ENCODE measurements at regions of chr7 and their contacts with region 1.

Region 1: DNA sequence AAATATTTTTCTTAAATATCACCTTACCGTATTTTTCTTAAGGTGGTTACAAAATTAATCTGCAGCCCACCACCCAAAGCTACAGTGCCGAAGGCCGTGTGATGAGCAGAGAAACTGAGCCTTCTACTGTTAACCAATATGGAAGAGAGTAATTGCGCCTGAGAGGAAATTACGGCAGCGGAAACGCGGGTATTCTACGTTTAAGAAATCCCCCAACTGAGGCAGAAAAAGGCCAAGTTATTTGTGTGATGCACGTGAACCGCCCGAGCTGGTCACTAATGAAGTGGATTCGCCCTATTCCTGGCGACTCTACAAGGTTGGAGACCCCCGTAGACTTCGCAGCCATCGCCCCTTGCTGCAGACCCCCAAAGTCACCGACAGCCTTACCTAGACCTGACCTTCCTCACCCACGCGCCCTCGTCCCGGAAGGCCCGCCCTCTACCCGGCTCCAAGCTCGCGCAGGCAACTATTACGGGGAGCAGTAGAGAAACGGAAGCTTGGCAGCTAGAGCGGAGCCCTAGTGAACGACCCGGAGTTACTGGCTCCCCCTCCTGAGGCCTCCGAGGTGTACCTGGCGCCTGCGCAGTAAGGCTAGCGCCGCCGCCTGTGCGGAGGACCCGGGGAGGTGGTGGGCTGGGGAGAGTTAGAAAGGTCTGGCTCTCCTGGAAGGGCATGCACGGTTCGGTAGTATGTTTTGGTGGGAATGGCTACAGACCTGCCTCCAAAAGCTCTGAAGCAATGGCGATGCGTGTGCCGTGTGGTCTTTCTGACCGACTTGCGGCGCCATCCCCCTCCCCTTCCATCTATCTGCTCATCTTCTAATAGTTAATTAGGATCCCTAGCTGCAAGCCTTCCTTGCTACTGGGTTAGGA is at the start of gene MRPS33:
- DNase-seq: peak; percentile 95 to 96
- ATAC-seq: peak; percentile 99
- H3K4me3 ChIP-seq: peak within 1 kb of the TSS; percentile 67 to 78 (median 71)
- H3K27ac ChIP-seq: peak within 1 kb of the TSS; percentile 79 to 91 (median 84)
- H3K4me1 ChIP-seq: peaks cover 14 to 18% of the 10 kb centered on the region in 2 donors
- H3K27me3 ChIP-seq: peaks cover 0 to 4% (median 0%) of the 10 kb centered on the region in 3 donors
- CTCF ChIP-seq: no peak
- POLR2A ChIP-seq: peak; percentile 70 to 76
- total RNA-seq, gene MRPS33: 23.4 to 60.1 (median 40.8) TPM

Region 2: GRCh38 chr7:140479062-140479738 is 535.6 kb before region 1 on chr7 and contains the start of gene MKRN1:
- in situ Hi-C with region 1: loop called in 1 of 4 experiments (anchors 25 kb)
- intact Hi-C with region 1: loop called (anchors 5 kb)
- DNase-seq: peak; percentile 92
- ATAC-seq: peak; percentile 92 to 97
- H3K4me3 ChIP-seq: peak within 1 kb of the TSS; percentile 85 to 98 (median 91)
- H3K27ac ChIP-seq: peak within 1 kb of the TSS; percentile 73 to 96 (median 84)
- H3K4me1 ChIP-seq: peaks cover 13 to 18% of the 10 kb centered on the region in 2 donors
- H3K27me3 ChIP-seq: no peaks in the 10 kb centered on the region
- CTCF ChIP-seq: peak in 1 of 5 experiments; percentile 24
- POLR2A ChIP-seq: peak; percentile 53 to 77
- total RNA-seq, gene MKRN1: 38.0 to 90.4 (median 64.7) TPM

Region 3: GRCh38 chr7:140673063-140673773 is 341.5 kb before region 1 on chr7:
- in situ Hi-C with region 1: loop called in 3 of 4 experiments (anchors 25 kb)
- intact Hi-C with region 1: loop called (anchors 5 kb)
- DNase-seq: peak in 1 of 2 donors; percentile 31
- ATAC-seq: peak; percentile 72 to 75
- H3K4me3 ChIP-seq: peak overlapping the region; percentile 66 to 89 (median 75)
- H3K27ac ChIP-seq: peak overlapping the region; percentile 69 to 83 (median 76)
- H3K4me1 ChIP-seq: peaks cover 16 to 26% of the 10 kb centered on the region in 2 donors
- H3K27me3 ChIP-seq: no peaks in the 10 kb centered on the region
- CTCF ChIP-seq: no peak
- POLR2A ChIP-seq: peak; percentile 18 to 45

Region 4: GRCh38 chr7:140810830-140811556 is 203.8 kb before region 1 on chr7:
- in situ Hi-C with region 1: loop called (anchors 5 kb)
- intact Hi-C with region 1: loop called (anchors 1 kb)
- DNase-seq: peak; percentile 18 to 41
- ATAC-seq: peak; percentile 93 to 97
- H3K4me3 ChIP-seq: no peak overlapping the region
- H3K27ac ChIP-seq: no peak overlapping the region
- H3K4me1 ChIP-seq: no peaks in the 10 kb centered on the region
- H3K27me3 ChIP-seq: no peaks in the 10 kb centered on the region
- CTCF ChIP-seq: peak; percentile 53 to 78 (median 70)
- POLR2A ChIP-seq: no peak

Region 5: GRCh38 chr7:140876519-140877248 is 138.1 kb before region 1 on chr7:
- in situ Hi-C with region 1: no loop called
- intact Hi-C with region 1: no loop called
- DNase-seq: no peak
- ATAC-seq: no peak
- H3K4me3 ChIP-seq: no peak overlapping the region
- H3K27ac ChIP-seq: no peak overlapping the region
- H3K4me1 ChIP-seq: peaks cover 9 to 17% of the 10 kb centered on the region in 2 donors
- H3K27me3 ChIP-seq: no peaks in the 10 kb centered on the region
- CTCF ChIP-seq: no peak
- POLR2A ChIP-seq: no peak

Region 6: DNA sequence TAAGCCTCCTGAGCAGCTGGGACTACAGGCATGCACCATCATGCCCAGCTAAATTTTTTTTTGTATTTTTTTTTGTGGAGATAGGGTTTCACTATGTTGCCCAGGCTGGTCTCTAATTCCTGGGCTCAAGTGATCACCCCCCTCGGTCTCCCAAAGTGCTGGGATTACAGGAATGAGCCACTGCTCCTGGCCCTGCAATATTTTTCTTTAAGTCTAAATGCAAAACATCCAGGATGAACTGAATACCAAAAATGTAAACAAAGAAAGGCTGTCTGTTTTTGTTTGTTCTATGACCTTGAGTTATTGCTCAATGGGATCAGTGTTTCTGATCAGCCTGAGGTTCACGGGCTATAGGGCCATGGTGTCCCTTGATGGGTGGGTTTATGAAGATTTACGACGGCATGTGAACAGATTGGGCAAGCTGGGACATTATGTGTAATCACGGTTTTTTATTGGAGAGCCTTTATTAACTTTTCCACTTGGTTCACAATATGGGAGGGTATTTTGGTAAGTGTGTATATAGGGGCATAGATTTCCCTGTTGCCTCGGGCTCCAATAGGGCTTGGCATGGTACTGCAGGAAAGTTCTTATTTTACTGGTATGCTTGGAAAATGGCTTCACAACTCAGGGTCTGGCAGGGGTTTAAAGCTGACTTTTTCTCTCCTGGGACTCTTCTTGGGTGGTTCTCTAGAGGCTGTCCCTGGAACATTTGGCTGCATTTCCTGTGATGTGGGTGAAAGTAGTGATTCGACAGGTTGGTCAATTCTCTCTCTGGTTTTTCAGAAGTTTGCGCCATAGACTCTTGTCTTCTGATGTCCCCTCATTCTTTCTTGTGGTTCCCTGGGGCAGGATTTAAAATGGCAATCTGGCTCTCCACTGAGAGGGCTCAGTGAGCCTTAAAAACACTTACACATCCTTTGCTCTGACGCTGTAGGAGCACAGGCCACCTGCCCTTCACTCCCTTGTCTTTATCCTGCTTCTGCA is 41.6 kb before region 1 on chr7:
- in situ Hi-C with region 1: no loop called
- intact Hi-C with region 1: no loop called
- DNase-seq: no peak
- ATAC-seq: no peak
- H3K4me3 ChIP-seq: no peak overlapping the region
- H3K27ac ChIP-seq: no peak overlapping the region
- H3K4me1 ChIP-seq: no peaks in the 10 kb centered on the region
- H3K27me3 ChIP-seq: no peaks in the 10 kb centered on the region
- CTCF ChIP-seq: no peak
- POLR2A ChIP-seq: no peak

Region 7: DNA sequence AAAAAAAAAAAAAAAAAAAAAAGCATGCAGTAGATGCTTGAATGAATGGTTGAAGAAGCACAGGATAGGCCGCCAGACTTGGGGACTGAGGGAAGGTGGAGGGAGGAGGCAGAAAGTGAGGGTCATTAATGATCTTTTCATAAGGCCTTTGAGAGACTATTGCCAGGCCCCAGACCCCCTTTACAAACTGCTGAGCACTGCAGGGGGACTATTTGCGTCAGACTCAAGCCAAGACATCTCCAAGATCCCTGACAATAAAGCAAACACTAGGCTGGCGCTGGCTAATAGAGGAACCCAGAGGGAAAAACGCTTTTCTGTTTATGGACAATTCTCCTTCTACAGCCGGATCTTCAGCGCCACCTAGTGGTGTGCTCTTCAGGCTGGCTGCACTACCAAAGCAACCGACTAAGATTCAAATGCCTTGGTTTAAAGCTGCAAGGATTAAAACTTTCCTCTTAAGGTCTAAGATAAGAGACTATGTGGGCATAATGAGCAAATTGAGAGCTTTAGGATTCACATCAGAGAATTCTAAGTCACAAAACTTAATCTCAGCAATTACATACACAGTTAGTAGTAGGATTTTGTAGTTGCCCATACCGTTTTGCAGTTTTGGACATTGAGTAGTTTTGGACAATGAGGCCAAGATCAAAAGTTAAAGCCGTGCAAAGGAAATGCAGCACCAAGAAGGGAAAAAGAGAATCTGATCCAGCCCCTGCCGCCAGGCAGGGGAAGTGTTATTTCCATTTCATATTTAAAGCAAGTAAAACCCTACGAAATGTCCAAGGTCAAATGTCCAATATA is 518.6 kb after region 1 on chr7:
- in situ Hi-C with region 1: loop called in 1 of 4 experiments (anchors 25 kb)
- intact Hi-C with region 1: loop called (anchors 5 kb)
- DNase-seq: peak; percentile 22 to 33
- ATAC-seq: peak; percentile 83 to 89
- H3K4me3 ChIP-seq: no peak overlapping the region
- H3K27ac ChIP-seq: no peak overlapping the region
- H3K4me1 ChIP-seq: peaks cover 0 to 15% of the 10 kb centered on the region in 2 donors
- H3K27me3 ChIP-seq: no peaks in the 10 kb centered on the region
- CTCF ChIP-seq: peak; percentile 71 to 96 (median 75)
- POLR2A ChIP-seq: no peak